ENCODE measurements at regions of chr12 and their contacts with region 1.

Region 1: DNA sequence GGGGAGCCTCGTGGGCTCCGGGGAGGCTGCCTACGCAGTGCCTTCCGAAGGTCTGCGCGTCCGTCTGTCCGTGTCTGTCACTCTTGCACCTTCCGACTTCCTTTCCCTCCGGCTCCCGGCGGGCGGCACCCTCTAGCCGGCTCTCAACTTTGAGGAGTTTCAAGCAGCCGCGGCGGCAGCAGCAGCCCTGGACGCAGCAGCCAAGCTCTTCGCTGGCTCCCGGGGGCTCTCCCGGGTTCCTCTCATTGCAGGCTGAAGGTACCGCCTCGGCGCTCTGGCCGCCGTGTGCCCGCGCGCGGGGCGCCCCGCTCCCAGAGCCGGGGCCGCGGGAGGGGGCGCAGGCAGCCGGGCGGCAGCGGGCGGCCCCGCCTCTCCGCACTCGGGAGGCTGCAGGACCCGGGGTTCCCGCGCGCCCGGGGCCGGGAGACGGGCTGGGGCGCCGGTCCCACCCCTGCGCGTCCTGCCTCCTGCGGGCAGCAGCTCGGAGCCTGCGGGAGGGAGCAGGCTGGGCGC is at the starts of genes AMIGO2 and PCED1B:
- DNase-seq: peak; percentile 70 to 80
- ATAC-seq: peak; percentile 44 to 85 (median 74)
- H3K4me3 ChIP-seq: peak within 1 kb of the TSS; percentile 57 to 80 (median 71)
- H3K27ac ChIP-seq: peak within 1 kb of the TSS; percentile 76 to 92 (median 90)
- H3K4me1 ChIP-seq: peaks cover 0 to 41% (median 15%) of the 10 kb centered on the region in 9 donors
- H3K27me3 ChIP-seq: peaks cover 0 to 22% (median 11%) of the 10 kb centered on the region in 7 donors
- CTCF ChIP-seq: peak in 7 of 9 donors; percentile 23 to 62 (median 45)
- total RNA-seq, gene AMIGO2: 1.1 to 3.2 (median 1.9) TPM
- total RNA-seq, gene PCED1B: 0.49 to 4.8 (median 0.87) TPM

Region 2: GRCh38 chr12:47188576-47189441 is 109.3 kb after region 1 on chr12:
- intact Hi-C with region 1: loop called in 1 of 10 experiments (anchors 10 kb)
- DNase-seq: no peak
- ATAC-seq: no peak
- H3K4me3 ChIP-seq: no peak overlapping the region
- H3K27ac ChIP-seq: no peak overlapping the region
- H3K4me1 ChIP-seq: peaks cover 0 to 52% (median 17%) of the 10 kb centered on the region in 9 donors
- H3K27me3 ChIP-seq: no peaks in the 10 kb centered on the region
- CTCF ChIP-seq: no peak

Region 3: DNA sequence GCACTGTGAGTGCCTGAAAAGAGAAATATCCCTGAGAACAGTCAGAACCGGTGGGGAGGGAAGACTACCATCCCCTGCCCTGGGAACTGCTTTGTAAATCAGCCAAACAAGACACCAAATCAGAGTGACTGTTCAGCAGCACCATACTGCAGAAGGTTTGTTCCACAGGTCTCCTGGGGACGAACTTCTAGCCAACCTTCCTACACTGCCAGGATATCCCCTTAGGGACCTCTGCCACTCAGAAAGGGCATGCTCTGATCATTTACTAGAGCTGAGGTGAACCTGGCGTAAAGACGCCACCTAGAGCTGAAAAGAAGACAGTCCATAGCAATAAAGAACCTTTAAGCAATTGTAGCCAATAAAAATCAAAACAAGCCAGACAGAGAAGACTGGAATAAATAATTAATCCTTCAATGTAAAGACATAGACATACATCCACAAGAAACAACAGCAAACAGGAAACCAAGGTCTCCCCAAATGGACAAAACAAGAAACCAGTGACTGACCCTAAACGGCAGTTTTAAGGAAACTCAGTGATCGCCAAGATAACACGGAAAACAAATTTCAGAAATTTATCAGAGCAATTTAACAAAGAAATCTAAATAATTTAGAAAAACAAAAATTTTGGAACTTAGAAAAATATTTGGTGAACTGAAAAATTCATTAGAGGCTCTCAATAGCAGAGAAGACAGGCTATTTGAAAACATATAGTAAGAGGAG is 228.3 kb after region 1 on chr12:
- intact Hi-C with region 1: loop called in 5 of 10 experiments (anchors 2 to 10 kb)
- DNase-seq: no peak
- ATAC-seq: peak; percentile 47 to 90 (median 75)
- H3K4me3 ChIP-seq: peak overlapping the region in 2 of 10 donors; percentile 2 to 31
- H3K27ac ChIP-seq: peak overlapping the region in 1 of 10 donors; percentile 16
- H3K4me1 ChIP-seq: peaks cover 0 to 12% (median 0%) of the 10 kb centered on the region in 9 donors
- H3K27me3 ChIP-seq: no peaks in the 10 kb centered on the region
- CTCF ChIP-seq: peak in 7 of 9 donors; percentile 42 to 66 (median 53)

Region 4: DNA sequence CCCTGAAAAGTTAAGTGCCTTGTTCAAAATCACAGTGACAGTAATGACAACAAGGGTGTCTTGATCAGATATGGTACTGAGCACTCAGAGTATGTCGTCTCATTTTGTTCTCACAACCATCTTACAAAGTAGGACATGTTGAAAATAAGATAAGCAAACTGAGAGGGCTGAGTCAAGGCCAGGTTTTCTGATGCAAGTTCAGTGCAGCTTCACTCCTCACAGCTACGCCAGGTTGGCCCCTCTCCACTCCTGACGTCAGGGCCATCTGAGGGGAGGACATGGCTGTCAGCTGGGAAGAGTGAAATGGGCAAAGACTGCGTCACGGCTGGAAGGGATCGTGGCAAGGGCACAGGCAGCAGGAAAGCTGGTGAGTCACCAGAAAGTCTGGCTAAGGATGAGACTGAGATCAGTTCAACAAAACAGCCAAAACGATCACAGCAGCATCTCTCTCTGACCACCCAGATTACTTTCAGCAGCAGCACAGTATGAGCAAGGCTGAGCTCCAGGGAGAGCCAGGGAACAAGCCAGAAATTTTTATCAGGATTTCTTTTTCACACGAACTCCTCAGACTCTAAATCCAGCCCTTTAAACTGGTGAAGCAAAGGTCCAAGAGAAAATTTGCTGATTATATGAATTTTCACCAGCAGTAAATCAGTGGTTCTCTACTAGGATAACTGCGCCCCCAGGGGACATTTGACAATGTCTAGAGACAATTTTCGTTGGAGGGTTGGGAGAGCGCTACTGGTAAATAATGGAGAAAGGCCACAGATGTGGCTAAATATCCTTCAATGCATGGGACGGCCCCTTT is 298.1 kb after region 1 on chr12:
- intact Hi-C with region 1: loop called in 2 of 10 experiments (anchors 10 kb)
- DNase-seq: peak; percentile 92
- ATAC-seq: peak; percentile 91 to 99 (median 97)
- H3K4me3 ChIP-seq: no peak overlapping the region
- H3K27ac ChIP-seq: peak overlapping the region in 9 of 10 donors; percentile 2 to 74 (median 59)
- H3K4me1 ChIP-seq: peaks cover 0 to 25% (median 18%) of the 10 kb centered on the region in 9 donors
- H3K27me3 ChIP-seq: no peaks in the 10 kb centered on the region
- CTCF ChIP-seq: no peak

Region 5: DNA sequence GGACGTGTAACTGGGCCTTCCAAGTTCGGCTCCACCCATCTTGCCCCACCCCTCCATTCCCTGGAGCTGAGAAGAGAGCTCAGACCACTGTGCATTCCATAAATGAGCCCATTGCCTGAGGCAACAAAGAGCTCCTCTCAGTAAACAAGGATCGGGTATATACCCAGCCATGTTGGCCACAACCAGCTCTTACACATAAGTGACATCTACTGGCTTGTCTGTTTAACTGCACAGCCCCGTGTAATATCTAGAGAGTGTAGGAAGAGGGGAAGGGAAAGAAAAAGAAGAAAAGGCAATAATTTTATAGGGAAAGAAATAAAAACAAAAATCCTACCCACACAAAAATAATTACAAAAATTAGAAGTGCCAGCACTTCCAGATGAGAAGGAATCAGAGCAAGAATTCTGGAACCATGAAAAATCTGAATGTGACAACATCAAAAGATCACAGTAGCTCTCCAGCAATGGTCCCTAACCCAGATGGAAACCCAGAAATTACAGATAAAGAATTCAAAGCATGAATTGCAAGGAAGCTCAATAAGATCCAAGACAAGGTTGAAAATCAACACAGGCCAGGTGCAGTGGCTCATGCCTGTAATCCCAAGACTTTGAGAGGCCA is 318.2 kb after region 1 on chr12:
- intact Hi-C with region 1: loop called in 1 of 10 experiments (anchors 5 kb)
- DNase-seq: no peak
- ATAC-seq: peak in 5 of 8 donors; percentile 43 to 80 (median 66)
- H3K4me3 ChIP-seq: no peak overlapping the region
- H3K27ac ChIP-seq: peak overlapping the region in 1 of 10 donors; percentile 16
- H3K4me1 ChIP-seq: peaks cover 0 to 22% (median 8%) of the 10 kb centered on the region in 9 donors
- H3K27me3 ChIP-seq: no peaks in the 10 kb centered on the region
- CTCF ChIP-seq: peak in 8 of 9 donors; percentile 29 to 60 (median 38)